AG04449 (cell line): ENCODE measurements at regions of chr4 and their contacts with region 1.

Region 1: DNA sequence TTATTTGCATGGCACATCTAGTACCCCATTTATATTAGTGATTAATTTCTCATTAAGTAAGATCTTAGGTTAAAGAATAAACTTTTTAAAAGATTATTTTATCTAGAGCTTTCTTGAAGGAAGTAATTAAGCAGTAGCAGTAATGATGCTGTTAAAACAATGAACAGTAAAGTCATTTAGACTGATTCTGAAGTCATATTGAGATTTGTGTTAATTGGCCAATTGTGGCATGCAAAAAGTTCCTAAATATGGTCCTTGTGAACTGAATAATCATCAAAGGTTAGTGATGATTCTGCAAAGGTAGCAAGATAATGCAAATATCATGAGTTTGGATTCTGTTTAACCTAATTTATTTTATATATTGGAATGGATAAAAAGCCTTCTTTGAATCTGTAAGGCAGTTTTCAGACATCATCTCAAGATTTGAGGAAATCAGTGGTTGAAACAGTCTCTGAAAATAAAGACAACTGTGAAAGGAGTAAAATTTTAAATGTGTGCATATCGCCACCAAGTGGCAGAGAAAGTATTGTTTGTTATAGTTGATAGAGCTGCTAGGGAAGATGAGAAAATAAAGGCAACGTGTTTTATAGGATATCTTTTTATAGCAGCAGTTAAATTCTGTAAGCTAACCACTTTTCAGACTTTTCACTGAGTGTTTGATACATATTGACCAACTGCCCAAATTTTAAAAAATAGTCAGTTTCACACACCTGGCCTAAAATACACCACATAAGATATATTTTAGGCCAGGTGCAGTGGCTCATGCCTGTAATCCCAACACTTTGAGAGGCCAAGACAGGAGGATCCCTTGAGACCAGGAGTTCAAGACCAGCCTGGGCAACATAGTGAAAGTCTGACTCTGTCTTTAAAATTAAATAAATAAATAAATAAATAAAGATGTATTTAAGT is 79.6 kb downstream of the CCKAR start:
- DNase-seq: no peak
- H3K4me3 ChIP-seq: no peak overlapping the region
- CTCF ChIP-seq: peak; percentile 30

Region 2: GRCh38 chr4:25993395-25994185 is 417.0 kb before region 1 on chr4:
- CTCF ChIA-PET with region 1: interaction called, 61 read pairs
- POLR2A ChIA-PET with region 1: no interaction called
- DNase-seq: no peak
- H3K4me3 ChIP-seq: no peak overlapping the region
- CTCF ChIP-seq: peak; percentile 5

Region 3: GRCh38 chr4:26028793-26029567 is 381.7 kb before region 1 on chr4:
- CTCF ChIA-PET with region 1: interaction called, 35 read pairs
- POLR2A ChIA-PET with region 1: no interaction called
- DNase-seq: no peak
- H3K4me3 ChIP-seq: no peak overlapping the region
- CTCF ChIP-seq: peak; percentile 98

Region 4: DNA sequence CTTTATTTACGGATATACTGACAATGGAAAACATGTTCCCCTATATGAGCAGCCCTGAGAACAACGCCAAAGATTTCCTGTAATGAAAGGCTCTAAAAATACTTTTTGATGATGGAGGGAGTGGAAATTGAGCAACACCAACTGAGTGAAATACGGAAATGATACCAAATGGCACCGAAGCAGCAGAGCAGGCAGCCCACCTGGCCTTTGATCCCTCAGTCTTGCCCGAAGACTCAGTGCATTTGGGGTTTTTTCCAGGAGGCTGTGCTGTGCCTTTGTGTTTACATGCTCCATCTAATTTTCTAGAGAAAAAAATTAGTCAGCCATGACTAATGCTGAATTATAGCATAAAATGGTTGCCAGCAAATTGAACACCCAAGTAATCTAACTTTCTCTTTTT is 259.7 kb before region 1 on chr4:
- CTCF ChIA-PET with region 1: no interaction called
- POLR2A ChIA-PET with region 1: no interaction called
- DNase-seq: no peak
- H3K4me3 ChIP-seq: no peak overlapping the region
- CTCF ChIP-seq: no peak

Region 5: GRCh38 chr4:26325191-26325590 is 85.4 kb before region 1 on chr4:
- CTCF ChIA-PET with region 1: interaction called, 211 read pairs
- POLR2A ChIA-PET with region 1: no interaction called
- DNase-seq: no peak
- H3K4me3 ChIP-seq: no peak overlapping the region
- CTCF ChIP-seq: peak; percentile 40

Region 6: GRCh38 chr4:26397086-26397485 is 13.6 kb before region 1 on chr4:
- CTCF ChIA-PET with region 1: interaction called, 27 read pairs
- POLR2A ChIA-PET with region 1: no interaction called
- DNase-seq: no peak
- H3K4me3 ChIP-seq: no peak overlapping the region
- CTCF ChIP-seq: no peak

Region 7: GRCh38 chr4:26568446-26568994 is 157.9 kb after region 1 on chr4:
- CTCF ChIA-PET with region 1: no interaction called
- POLR2A ChIA-PET with region 1: no interaction called
- DNase-seq: peak; percentile 82
- H3K4me3 ChIP-seq: no peak overlapping the region
- CTCF ChIP-seq: no peak

Region 8: GRCh38 chr4:26719954-26720552 is 309.4 kb after region 1 on chr4:
- CTCF ChIA-PET with region 1: interaction called, 38 read pairs
- POLR2A ChIA-PET with region 1: no interaction called
- DNase-seq: no peak
- H3K4me3 ChIP-seq: no peak overlapping the region
- CTCF ChIP-seq: peak; percentile 43

Region 9: GRCh38 chr4:26887143-26887542 is 476.5 kb after region 1 on chr4:
- CTCF ChIA-PET with region 1: no interaction called
- POLR2A ChIA-PET with region 1: no interaction called
- DNase-seq: no peak
- H3K4me3 ChIP-seq: no peak overlapping the region
- CTCF ChIP-seq: no peak